Activated B cell treated with CpG ODN at 0.5 μM for 24 hours (primary cell): ENCODE measurements at regions of chr2 and their contacts with region 1.

Region 1: GRCh38 chr2:64214281-64215115 is 70.3 kb upstream of the PELI1 start:
- DNase-seq: no peak
- ATAC-seq: peak; percentile 64
- H3K4me3 Mint-ChIP-seq: peak overlapping the region; percentile 75
- H3K27ac Mint-ChIP-seq: peak overlapping the region; percentile 99
- H3K4me1 Mint-ChIP-seq: peaks cover 76% of the 10 kb centered on the region
- H3K27me3 Mint-ChIP-seq: no peaks in the 10 kb centered on the region
- CTCF ChIP-seq: no peak

Region 2: GRCh38 chr2:64092502-64092901 is 122.0 kb before region 1 on chr2:
- CTCF ChIA-PET with region 1: no interaction called
- POLR2A ChIA-PET with region 1: no interaction called
- intact Hi-C with region 1: loop called (anchors 2 kb)
- DNase-seq: no peak
- ATAC-seq: peak; percentile 31
- H3K4me3 Mint-ChIP-seq: peak overlapping the region; percentile 52
- H3K27ac Mint-ChIP-seq: peak overlapping the region; percentile 91
- H3K4me1 Mint-ChIP-seq: peaks cover 66% of the 10 kb centered on the region
- H3K27me3 Mint-ChIP-seq: no peaks in the 10 kb centered on the region
- CTCF ChIP-seq: no peak

Region 3: GRCh38 chr2:64179582-64180321 is 34.7 kb before region 1 on chr2:
- CTCF ChIA-PET with region 1: no interaction called
- POLR2A ChIA-PET with region 1: interaction called, 6 read pairs
- intact Hi-C with region 1: loop called (anchors 5 kb)
- DNase-seq: no peak
- ATAC-seq: peak; percentile 81
- H3K4me3 Mint-ChIP-seq: no peak overlapping the region
- H3K27ac Mint-ChIP-seq: peak overlapping the region; percentile 62
- H3K4me1 Mint-ChIP-seq: peaks cover 9% of the 10 kb centered on the region
- H3K27me3 Mint-ChIP-seq: no peaks in the 10 kb centered on the region
- CTCF ChIP-seq: no peak

Region 4: DNA sequence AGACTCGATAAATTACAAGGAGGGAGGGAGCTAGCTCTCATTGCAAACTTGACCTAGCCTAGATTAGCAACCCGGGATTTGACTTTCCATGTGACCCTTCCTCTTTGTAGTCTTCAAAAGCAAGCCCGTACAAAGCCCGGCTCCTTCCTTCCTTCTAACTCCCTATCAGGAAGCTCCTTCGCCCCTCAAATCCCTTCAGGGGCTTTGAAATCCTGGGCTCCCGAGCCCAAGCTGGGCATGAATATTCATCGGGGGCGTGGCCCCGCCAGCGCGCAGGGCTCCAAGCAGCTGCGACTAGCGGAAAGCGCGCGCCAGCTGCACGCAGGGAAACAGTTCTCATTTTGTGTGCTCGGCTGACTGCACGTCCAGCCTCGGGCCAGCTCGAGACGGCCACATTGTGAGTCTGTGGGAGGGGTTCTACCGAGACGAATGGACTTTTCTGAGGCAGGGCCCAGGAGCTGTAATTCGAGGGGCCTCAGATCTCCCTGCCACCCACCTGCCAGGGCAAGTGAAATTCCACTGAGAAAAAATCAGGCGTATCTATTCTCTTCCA is 13.7 kb after region 1 on chr2:
- CTCF ChIA-PET with region 1: interaction called, 10 read pairs
- POLR2A ChIA-PET with region 1: interaction called, 24 read pairs
- intact Hi-C with region 1: loop called (anchors 1 kb)
- DNase-seq: peak; percentile 67
- ATAC-seq: peak; percentile 96
- H3K4me3 Mint-ChIP-seq: peak overlapping the region; percentile 93
- H3K27ac Mint-ChIP-seq: peak overlapping the region; percentile 91
- H3K4me1 Mint-ChIP-seq: peaks cover 35% of the 10 kb centered on the region
- H3K27me3 Mint-ChIP-seq: no peaks in the 10 kb centered on the region
- CTCF ChIP-seq: no peak